Activated naive CD4-positive, alpha-beta T cell treated with anti-CD3 and anti-CD28 coated beads for 36 hours (primary cell): ENCODE measurements at regions of chr11 and their contacts with region 1.

Region 1: DNA sequence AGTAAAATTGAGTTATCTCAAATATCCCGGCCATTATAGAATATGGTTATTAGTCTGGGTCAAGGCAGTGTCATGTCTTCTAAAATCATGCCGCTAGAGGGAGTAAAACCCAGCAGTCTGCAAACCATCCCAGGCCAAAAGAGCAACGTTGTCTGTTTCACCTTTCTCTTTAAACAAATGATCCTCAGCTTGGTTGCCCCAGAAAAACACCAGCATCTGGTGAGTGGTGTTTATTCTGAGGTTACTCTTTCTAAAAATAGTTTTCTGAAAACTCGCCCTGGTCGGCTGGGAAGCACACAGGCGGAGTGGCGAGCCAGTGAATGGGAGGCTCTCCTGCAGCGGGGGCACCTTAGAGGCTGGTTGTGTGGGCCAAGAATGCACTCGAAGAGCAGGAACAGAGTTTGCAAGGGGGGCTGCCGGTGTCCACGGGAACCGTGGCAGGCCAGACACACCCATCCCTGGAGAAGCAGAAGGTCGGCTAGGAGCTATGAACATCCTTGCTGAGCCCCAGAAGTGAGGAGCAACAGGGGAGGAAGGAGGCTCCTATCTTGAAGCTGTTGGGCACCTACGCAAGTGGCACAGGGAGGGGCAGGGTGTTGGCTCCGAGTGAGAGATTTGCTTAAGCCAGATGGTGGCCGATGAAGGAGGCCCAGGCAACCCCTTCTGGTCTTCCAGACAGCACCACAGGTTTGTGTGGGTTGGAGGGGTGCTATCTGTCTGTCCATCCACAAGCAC is 297.1 kb downstream of the ETS1 start:
- DNase-seq: peak; percentile 83
- H3K4me3 Mint-ChIP-seq: peak overlapping the region; percentile 87
- H3K27ac Mint-ChIP-seq: peak overlapping the region; percentile 96
- H3K4me1 Mint-ChIP-seq: peaks cover 98% of the 10 kb centered on the region
- H3K27me3 Mint-ChIP-seq: no peaks in the 10 kb centered on the region

Region 2: DNA sequence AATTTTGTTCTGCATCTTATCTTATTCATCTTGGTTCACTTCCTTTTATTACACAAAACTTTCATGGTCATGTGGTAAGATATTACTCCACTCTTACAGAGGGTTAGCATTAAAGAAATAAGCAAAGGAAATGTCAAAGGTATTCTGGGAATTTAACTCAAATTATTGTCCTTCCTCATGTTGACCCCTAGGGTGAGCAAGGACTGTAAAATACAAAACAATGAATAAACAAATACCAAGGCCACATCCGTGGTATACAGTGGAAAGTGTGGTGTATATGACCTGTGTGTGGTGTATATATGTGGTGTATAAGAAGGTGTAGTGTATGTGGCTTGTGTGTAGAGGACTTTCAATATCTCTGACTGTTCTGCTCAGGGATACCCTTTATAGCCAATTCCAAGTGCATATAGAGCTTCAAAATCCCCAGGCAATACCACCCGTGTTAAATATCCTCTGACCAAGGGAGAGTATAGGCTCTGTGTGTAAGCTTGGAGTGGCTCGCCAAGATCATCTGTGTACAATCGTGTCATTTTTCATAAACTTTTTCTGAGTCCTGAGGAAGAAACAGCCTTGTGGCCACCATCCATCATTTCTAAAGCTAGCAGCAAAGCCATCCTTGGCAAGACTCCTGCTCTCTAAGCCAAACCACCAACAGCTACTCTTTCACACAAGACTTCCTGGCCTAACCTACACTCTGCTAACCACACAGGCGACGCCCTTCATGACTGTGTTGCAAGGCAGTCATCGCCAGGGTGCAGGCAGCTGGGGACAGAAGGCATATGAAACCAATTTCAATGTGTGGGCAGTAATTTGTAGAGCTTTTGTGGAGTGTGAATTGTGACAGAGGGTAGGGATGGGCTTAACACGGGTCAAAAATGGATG is 250.9 kb before region 1 on chr11:
- CTCF ChIA-PET with region 1: interaction called, 3 read pairs
- intact Hi-C with region 1: loop called (anchors 1 kb)
- DNase-seq: peak; percentile 89
- H3K4me3 Mint-ChIP-seq: peak overlapping the region; percentile 40
- H3K27ac Mint-ChIP-seq: peak overlapping the region; percentile 92
- H3K4me1 Mint-ChIP-seq: peaks cover 47% of the 10 kb centered on the region
- H3K27me3 Mint-ChIP-seq: no peaks in the 10 kb centered on the region

Region 3: GRCh38 chr11:128214263-128214662 is 76.0 kb before region 1 on chr11:
- CTCF ChIA-PET with region 1: no interaction called
- intact Hi-C with region 1: no loop called
- DNase-seq: no peak
- H3K4me3 Mint-ChIP-seq: no peak overlapping the region
- H3K27ac Mint-ChIP-seq: no peak overlapping the region
- H3K4me1 Mint-ChIP-seq: peaks cover 8% of the 10 kb centered on the region
- H3K27me3 Mint-ChIP-seq: no peaks in the 10 kb centered on the region

Region 4: GRCh38 chr11:128226106-128226716 is 64.1 kb before region 1 on chr11:
- CTCF ChIA-PET with region 1: no interaction called
- intact Hi-C with region 1: loop called (anchors 1 kb)
- DNase-seq: peak; percentile 37
- H3K4me3 Mint-ChIP-seq: no peak overlapping the region
- H3K27ac Mint-ChIP-seq: no peak overlapping the region
- H3K4me1 Mint-ChIP-seq: peaks cover 40% of the 10 kb centered on the region
- H3K27me3 Mint-ChIP-seq: no peaks in the 10 kb centered on the region

Region 5: GRCh38 chr11:128323381-128323780 is 33.1 kb after region 1 on chr11:
- CTCF ChIA-PET with region 1: interaction called, 51 read pairs
- intact Hi-C with region 1: loop called (anchors 1 kb)
- DNase-seq: peak; percentile 72
- H3K4me3 Mint-ChIP-seq: peak overlapping the region; percentile 32
- H3K27ac Mint-ChIP-seq: peak overlapping the region; percentile 90
- H3K4me1 Mint-ChIP-seq: peaks cover 87% of the 10 kb centered on the region
- H3K27me3 Mint-ChIP-seq: no peaks in the 10 kb centered on the region

Region 6: GRCh38 chr11:128472128-128473089 is 182.1 kb after region 1 on chr11:
- CTCF ChIA-PET with region 1: interaction called, 20 read pairs
- intact Hi-C with region 1: loop called (anchors 1 kb)
- DNase-seq: peak; percentile 86
- H3K4me3 Mint-ChIP-seq: peak overlapping the region; percentile 56
- H3K27ac Mint-ChIP-seq: peak overlapping the region; percentile 97
- H3K4me1 Mint-ChIP-seq: peaks cover 95% of the 10 kb centered on the region
- H3K27me3 Mint-ChIP-seq: no peaks in the 10 kb centered on the region

Region 7: DNA sequence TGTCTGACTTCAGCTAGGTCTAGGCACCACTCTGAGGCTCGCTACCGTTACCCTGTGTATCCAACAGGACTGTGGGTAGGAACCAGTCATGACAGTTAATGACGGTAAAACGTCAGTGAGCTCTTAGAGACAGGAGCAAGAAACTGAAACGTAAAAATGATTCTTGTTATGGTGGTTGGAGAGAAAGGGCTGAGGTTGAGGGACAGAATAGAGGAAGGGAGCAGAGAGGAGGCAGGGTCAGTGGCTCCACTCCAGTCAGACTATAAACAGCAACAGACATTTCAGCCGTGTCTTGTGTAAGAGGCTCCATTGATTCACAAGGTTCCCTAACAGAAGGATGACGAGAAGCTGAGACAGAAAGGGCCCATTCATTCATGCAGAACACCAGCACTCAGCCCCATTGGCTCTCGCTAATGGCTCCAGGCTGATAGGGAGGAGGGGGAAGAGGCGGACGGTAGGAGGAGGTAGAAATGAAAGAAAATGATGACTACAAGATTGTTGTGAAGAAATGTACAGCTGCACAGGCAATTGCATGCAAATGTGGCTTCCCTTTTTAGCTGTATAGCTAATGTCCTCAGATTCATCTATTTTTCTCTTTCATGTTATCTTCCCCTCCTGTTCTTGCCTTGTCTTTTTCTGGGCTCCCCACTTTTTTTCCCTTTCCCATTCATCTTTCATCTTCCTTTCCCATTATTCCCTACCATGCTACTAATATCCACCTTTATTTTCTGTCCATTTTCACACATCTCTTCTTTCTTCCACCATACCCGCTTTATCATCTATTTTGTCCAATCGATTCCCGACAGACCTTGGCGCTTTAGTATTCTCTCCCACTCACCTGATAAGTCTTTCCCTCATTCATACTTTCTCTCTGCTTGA is 262.7 kb after region 1 on chr11:
- CTCF ChIA-PET with region 1: no interaction called
- intact Hi-C with region 1: loop called (anchors 1 kb)
- DNase-seq: peak; percentile 68
- H3K4me3 Mint-ChIP-seq: peak overlapping the region; percentile 19
- H3K27ac Mint-ChIP-seq: peak overlapping the region; percentile 95
- H3K4me1 Mint-ChIP-seq: peaks cover 59% of the 10 kb centered on the region
- H3K27me3 Mint-ChIP-seq: no peaks in the 10 kb centered on the region

Region 8: GRCh38 chr11:128720522-128720985 is 430.3 kb after region 1 on chr11:
- CTCF ChIA-PET with region 1: no interaction called
- intact Hi-C with region 1: loop called (anchors 5 kb)
- DNase-seq: peak; percentile 72
- H3K4me3 Mint-ChIP-seq: peak overlapping the region; percentile 73
- H3K27ac Mint-ChIP-seq: peak overlapping the region; percentile 87
- H3K4me1 Mint-ChIP-seq: peaks cover 97% of the 10 kb centered on the region
- H3K27me3 Mint-ChIP-seq: no peaks in the 10 kb centered on the region